Activated naive CD4-positive, alpha-beta T cell treated with anti-CD3 and anti-CD28 coated beads for 36 hours (primary cell): ENCODE measurements at regions of chr12 and their contacts with region 1.

Region 1: DNA sequence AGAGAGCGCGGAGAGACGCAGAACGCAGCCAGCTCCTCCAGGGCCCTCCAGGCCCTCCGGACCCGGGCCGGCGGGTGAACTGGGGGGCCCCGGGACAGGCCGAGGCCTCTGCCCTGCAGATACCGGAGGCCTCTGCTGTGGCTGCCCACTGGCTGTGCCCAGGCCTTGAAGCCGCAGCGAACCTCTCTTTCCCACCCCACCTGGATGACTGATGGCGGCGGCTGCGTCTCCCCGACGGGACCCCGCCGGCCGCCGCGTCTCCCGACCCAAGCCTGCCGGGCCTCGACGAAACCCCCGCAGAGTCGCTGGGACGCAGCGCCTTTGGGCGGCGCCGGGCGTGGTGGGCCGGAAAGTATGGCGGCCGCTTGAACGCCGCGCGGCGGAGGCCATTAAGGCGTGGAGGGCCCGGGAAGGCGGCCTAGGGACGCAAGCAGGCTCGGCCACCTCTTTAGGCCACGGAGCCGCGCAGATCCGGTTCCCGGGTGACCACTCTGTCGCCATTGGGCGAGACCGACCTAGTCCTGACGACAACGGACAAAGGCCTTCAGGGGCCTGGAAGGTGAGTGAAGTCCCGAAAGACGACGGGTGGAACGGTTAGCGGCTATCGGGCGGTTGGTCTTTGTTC is 8.4 kb upstream of the ERGIC2 start:
- DNase-seq: no peak
- H3K4me3 Mint-ChIP-seq: peak overlapping the region; percentile 11
- H3K27ac Mint-ChIP-seq: peak overlapping the region; percentile 89
- H3K4me1 Mint-ChIP-seq: peaks cover 15% of the 10 kb centered on the region
- H3K27me3 Mint-ChIP-seq: no peaks in the 10 kb centered on the region

Region 2: DNA sequence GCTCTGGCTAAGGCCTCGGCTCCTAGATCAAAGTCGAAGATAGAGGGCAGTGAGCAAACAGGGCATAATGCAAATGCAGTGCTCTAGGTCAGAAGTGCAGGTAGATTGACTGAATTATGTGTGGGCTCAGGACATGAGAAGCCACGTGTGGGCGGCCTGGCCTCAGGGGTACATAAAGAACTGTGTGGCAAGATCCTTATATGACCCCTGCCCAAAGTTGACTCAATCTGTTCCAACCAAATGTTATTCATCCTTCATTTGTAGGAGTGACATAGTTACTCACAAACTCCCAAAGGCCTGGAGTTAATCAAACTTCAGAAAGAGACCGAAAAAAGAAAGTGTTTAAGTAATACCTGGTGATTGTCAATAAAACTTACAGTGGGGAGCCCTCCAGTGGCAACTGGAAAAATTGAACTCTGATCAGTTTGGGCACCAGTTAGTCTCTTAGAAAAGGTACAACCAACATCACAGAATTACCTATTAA is 390.7 kb before region 1 on chr12:
- CTCF ChIA-PET with region 1: no interaction called
- intact Hi-C with region 1: no loop called
- DNase-seq: peak; percentile 40
- H3K4me3 Mint-ChIP-seq: no peak overlapping the region
- H3K27ac Mint-ChIP-seq: no peak overlapping the region
- H3K4me1 Mint-ChIP-seq: no peaks in the 10 kb centered on the region
- H3K27me3 Mint-ChIP-seq: peaks cover 6% of the 10 kb centered on the region

Region 3: GRCh38 chr12:29255042-29255441 is 134.4 kb before region 1 on chr12:
- CTCF ChIA-PET with region 1: no interaction called
- intact Hi-C with region 1: no loop called
- DNase-seq: no peak
- H3K4me3 Mint-ChIP-seq: no peak overlapping the region
- H3K27ac Mint-ChIP-seq: no peak overlapping the region
- H3K4me1 Mint-ChIP-seq: no peaks in the 10 kb centered on the region
- H3K27me3 Mint-ChIP-seq: no peaks in the 10 kb centered on the region

Region 4: GRCh38 chr12:29365091-29365490 is 24.3 kb before region 1 on chr12:
- CTCF ChIA-PET with region 1: no interaction called
- intact Hi-C with region 1: no loop called
- DNase-seq: no peak
- H3K4me3 Mint-ChIP-seq: no peak overlapping the region
- H3K27ac Mint-ChIP-seq: no peak overlapping the region
- H3K4me1 Mint-ChIP-seq: peaks cover 12% of the 10 kb centered on the region
- H3K27me3 Mint-ChIP-seq: no peaks in the 10 kb centered on the region

Region 5: GRCh38 chr12:29427964-29428363 is 38.6 kb after region 1 on chr12:
- CTCF ChIA-PET with region 1: no interaction called
- intact Hi-C with region 1: loop called (anchors 2 kb)
- DNase-seq: no peak
- H3K4me3 Mint-ChIP-seq: no peak overlapping the region
- H3K27ac Mint-ChIP-seq: no peak overlapping the region
- H3K4me1 Mint-ChIP-seq: peaks cover 9% of the 10 kb centered on the region
- H3K27me3 Mint-ChIP-seq: peaks cover 3% of the 10 kb centered on the region